ENCODE measurements at regions of chr1 and their contacts with region 1.

Region 1: DNA sequence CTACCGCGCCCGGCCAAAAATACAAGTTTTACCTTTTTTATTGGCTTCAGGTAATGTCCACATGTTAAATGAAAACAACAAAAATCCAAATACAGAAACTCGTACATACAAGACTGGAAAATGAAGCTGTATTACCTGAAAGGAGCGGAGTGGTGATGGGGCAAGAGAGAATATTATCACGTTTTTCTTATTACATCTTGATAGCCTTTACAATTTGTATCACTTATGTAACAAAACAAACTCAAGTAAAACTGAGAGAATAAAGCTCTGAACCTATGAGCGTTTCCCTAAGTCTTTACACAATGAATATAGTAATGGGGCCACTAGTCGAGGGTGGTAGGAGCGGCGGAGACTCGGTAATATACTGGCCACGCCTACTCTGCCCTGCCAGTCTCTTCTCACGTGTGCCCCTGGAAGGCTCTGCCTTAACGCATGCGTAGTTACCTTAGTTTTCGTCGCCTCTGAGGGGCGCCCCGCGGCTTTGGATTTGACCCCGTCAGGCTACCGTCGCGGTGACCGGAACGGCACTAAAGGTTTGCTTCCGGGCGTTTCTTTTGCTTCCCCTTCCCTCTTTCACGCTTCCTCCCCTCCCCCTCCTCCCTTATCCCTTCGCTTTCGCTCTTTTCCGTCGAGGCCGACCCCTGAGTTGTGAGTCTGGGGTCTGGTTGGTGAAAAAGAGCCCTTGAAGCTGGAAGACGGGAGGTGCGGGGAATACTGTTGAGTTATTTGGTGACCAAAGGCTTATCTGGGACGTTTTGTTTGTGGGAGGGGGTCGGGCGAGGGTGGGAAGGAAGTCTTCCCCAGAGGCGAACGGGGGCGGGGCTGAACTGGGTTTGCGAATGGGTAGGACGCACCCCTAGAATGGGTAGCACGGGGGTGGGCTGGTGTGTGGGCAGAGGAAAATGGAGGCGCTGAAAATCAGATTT is at the start of gene SETDB1:
- DNase-seq: peak; percentile 84 to 98 (median 91)
- ATAC-seq: peak; percentile 96
- H3K4me3 ChIP-seq: peak within 1 kb of the TSS; percentile 91 to 93
- H3K4me3 Mint-ChIP-seq: peak within 1 kb of the TSS; percentile 94
- H3K27ac ChIP-seq: peak within 1 kb of the TSS; percentile 79 to 93
- H3K27ac Mint-ChIP-seq: peak within 1 kb of the TSS; percentile 93
- H3K4me1 ChIP-seq: peaks cover 17% of the 10 kb centered on the region
- H3K4me1 Mint-ChIP-seq: peaks cover 31% of the 10 kb centered on the region
- H3K27me3 ChIP-seq: no peaks in the 10 kb centered on the region
- H3K27me3 Mint-ChIP-seq: no peaks in the 10 kb centered on the region
- CTCF ChIP-seq: no peak
- total RNA-seq, gene SETDB1: 44.1 to 47.4 TPM

Region 2: GRCh38 chr1:150464422-150464826 is 461.7 kb before region 1 on chr1:
- CTCF ChIA-PET with region 1: no interaction called
- POLR2A ChIA-PET with region 1: no interaction called
- intact Hi-C with region 1: loop called (anchors 1 kb)
- DNase-seq: peak; percentile 46 to 82 (median 73)
- ATAC-seq: peak; percentile 96
- H3K4me3 ChIP-seq: no peak overlapping the region
- H3K4me3 Mint-ChIP-seq: no peak overlapping the region
- H3K27ac ChIP-seq: no peak overlapping the region
- H3K27ac Mint-ChIP-seq: peak overlapping the region; percentile 33
- H3K4me1 ChIP-seq: no peaks in the 10 kb centered on the region
- H3K4me1 Mint-ChIP-seq: peaks cover 4% of the 10 kb centered on the region
- H3K27me3 ChIP-seq: no peaks in the 10 kb centered on the region
- H3K27me3 Mint-ChIP-seq: no peaks in the 10 kb centered on the region
- CTCF ChIP-seq: peak; percentile 78

Region 3: DNA sequence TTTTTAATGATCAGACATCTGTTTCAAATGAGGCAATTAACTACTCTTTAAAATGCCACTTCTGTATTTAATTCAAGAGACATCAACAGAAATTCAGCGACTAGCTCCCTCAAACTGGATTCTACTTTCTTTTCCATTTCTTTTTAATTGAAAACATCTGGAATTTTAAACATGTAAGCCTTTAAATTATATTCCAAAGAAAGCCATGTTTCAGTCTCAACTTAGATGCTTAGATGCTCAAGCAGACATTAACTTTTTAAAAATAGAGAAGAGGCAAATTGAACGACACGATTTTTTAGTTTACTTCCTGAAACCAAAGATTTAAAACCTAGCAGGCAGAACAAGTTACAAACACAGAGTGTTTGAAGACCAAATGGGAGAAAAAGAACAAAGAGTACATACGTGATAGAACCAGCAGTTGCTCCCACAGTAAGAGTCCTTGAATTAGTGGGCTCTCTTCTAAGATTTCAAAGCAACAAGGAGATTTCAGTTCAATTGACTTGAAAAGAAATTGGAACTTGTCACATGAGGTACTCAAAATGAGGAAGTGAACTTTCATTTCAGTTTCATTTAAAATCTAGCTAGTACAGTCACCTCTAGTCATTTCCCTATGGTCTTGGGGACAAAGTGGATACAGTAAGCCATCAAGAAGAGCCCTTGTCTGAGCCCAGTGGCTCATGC is 160.6 kb before region 1 on chr1 and contains the start of gene CTSS:
- CTCF ChIA-PET with region 1: no interaction called
- POLR2A ChIA-PET with region 1: no interaction called
- intact Hi-C with region 1: loop called in 1 of 2 experiments (anchors 5 kb)
- DNase-seq: peak in 2 of 9 experiments; percentile 39 to 66
- ATAC-seq: peak; percentile 64
- H3K4me3 ChIP-seq: peak within 1 kb of the TSS; percentile 47 to 69
- H3K4me3 Mint-ChIP-seq: peak within 1 kb of the TSS; percentile 94
- H3K27ac ChIP-seq: peak within 1 kb of the TSS; percentile 67 to 75
- H3K27ac Mint-ChIP-seq: peak within 1 kb of the TSS; percentile 95
- H3K4me1 ChIP-seq: peaks cover 25% of the 10 kb centered on the region
- H3K4me1 Mint-ChIP-seq: peaks cover 42% of the 10 kb centered on the region
- H3K27me3 ChIP-seq: no peaks in the 10 kb centered on the region
- H3K27me3 Mint-ChIP-seq: no peaks in the 10 kb centered on the region
- CTCF ChIP-seq: no peak
- total RNA-seq, gene CTSS: 58.3 to 63.0 TPM

Region 4: DNA sequence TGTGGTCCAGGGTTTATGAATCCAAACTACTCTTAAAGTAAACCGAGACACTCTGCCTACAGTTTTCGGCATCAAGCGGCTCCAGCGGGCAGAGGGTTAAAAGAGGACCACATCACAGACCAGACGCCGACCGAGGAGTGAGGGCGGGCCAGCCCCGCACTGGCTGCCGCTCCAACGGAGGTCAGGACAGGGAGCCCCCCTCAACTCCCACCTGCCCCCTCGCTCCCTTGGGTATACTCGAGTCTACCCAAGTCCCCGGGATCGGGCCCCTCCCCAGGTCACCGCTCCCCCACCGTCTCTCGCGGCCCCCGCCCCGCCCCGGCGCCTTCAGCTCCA is 50.0 kb before region 1 on chr1:
- CTCF ChIA-PET with region 1: interaction called, 5 read pairs
- POLR2A ChIA-PET with region 1: interaction called, 5 read pairs
- intact Hi-C with region 1: loop called (anchors 1 kb)
- DNase-seq: peak in 1 of 9 experiments; percentile 42
- ATAC-seq: peak; percentile 42
- H3K4me3 ChIP-seq: peak overlapping the region; percentile 86 to 97
- H3K4me3 Mint-ChIP-seq: peak overlapping the region; percentile 89
- H3K27ac ChIP-seq: peak overlapping the region; percentile 61 to 76
- H3K27ac Mint-ChIP-seq: peak overlapping the region; percentile 93
- H3K4me1 ChIP-seq: peaks cover 20% of the 10 kb centered on the region
- H3K4me1 Mint-ChIP-seq: peaks cover 29% of the 10 kb centered on the region
- H3K27me3 ChIP-seq: no peaks in the 10 kb centered on the region
- H3K27me3 Mint-ChIP-seq: no peaks in the 10 kb centered on the region
- CTCF ChIP-seq: no peak

Region 5: DNA sequence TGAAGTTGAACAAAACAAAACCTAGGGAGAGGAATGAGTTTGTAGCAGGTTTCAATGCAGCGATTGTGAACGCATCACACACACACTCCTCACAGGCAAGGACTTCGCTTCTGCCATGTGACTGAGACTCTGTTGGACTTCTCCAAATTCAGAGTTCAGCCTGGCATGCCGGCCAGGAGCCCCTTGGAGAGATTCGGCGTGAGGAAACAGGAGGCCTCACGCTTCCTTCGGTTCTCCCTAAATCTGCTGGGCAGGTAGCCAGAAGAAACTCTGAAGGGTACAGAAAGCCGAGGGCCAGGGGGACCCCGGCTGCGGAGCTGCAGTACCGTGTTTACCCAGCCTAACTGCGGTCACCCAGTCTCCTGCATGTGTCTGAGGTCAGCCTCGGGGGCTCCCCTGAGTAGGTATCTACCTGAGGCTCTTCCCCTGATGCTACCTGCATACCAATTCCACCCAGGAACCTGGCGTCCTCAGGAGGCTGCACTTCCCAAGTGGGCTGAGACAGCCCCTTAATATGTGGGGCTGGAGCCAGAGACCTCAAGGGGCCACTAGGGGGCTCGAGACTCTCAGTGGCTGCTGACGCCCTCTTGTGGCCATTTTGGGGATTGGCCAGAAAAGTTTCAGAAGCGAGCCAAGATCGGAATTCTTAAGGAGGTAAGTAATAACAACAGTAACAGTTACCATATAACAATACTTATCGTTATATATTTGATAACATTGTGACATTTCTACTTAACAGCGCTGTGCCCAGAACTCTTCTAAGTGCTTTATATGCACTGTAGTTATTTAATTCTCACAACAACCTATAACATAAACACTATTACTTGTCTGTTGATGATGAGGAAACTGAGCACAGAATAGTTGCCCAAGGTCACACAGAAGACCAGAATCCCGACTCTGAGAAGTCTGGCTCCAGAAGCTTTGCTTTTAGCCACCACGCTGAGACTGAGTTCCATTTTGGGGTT is 53.3 kb after region 1 on chr1:
- CTCF ChIA-PET with region 1: interaction called, 4 read pairs
- POLR2A ChIA-PET with region 1: no interaction called
- intact Hi-C with region 1: loop called (anchors 1 to 2 kb)
- DNase-seq: peak; percentile 83 to 93 (median 90)
- ATAC-seq: peak; percentile 62
- H3K4me3 ChIP-seq: peak overlapping the region; percentile 22 to 32
- H3K4me3 Mint-ChIP-seq: peak overlapping the region; percentile 57
- H3K27ac ChIP-seq: peak overlapping the region in 1 of 2 experiments; percentile 47
- H3K27ac Mint-ChIP-seq: peak overlapping the region; percentile 3
- H3K4me1 ChIP-seq: peaks cover 41% of the 10 kb centered on the region
- H3K4me1 Mint-ChIP-seq: peaks cover 38% of the 10 kb centered on the region
- H3K27me3 ChIP-seq: no peaks in the 10 kb centered on the region
- H3K27me3 Mint-ChIP-seq: no peaks in the 10 kb centered on the region
- CTCF ChIP-seq: peak; percentile 100